ENCODE measurements at regions of chr5 and their contacts with region 1.

Region 1: GRCh38 chr5:40904205-40904993 is 4.9 kb upstream of the C7 start:
- DNase-seq: peak; percentile 19 to 33
- ATAC-seq: peak; percentile 75 to 90
- H3K4me3 ChIP-seq: no peak overlapping the region
- H3K27ac ChIP-seq: peak overlapping the region in 3 of 4 donors; percentile 15 to 64 (median 53)
- H3K4me1 ChIP-seq: peaks cover 9 to 13% of the 10 kb centered on the region in 2 donors
- H3K27me3 ChIP-seq: no peaks in the 10 kb centered on the region
- CTCF ChIP-seq: peak; percentile 62 to 78 (median 76)
- POLR2A ChIP-seq: no peak

Region 2: GRCh38 chr5:40991168-40991980 is 87.0 kb after region 1 on chr5:
- in situ Hi-C with region 1: no loop called
- intact Hi-C with region 1: loop called (anchors 5 kb)
- DNase-seq: peak; percentile 34 to 53
- ATAC-seq: peak; percentile 89 to 95
- H3K4me3 ChIP-seq: no peak overlapping the region
- H3K27ac ChIP-seq: peak overlapping the region; percentile 51 to 72 (median 68)
- H3K4me1 ChIP-seq: peaks cover 0 to 10% of the 10 kb centered on the region in 2 donors
- H3K27me3 ChIP-seq: no peaks in the 10 kb centered on the region
- CTCF ChIP-seq: no peak
- POLR2A ChIP-seq: no peak

Region 3: DNA sequence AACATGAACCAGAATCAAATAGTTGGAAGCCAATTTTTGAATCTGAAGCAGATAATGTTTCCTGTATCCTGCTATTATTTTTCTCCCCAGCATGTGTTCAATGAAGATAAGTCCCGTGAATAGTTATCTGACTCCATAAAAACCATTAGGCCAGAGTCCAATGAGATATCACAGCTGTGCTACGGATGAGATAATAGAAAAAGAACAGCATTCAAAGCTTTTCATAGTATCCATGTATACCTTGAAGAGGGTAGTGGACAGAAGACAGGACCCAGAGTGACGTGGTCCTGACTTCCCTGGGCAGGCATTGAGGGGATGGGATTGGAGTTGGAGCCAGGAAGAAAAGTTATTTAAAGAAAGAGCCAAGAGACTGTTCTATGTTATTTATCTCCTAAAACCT is 359.6 kb after region 1 on chr5:
- in situ Hi-C with region 1: no loop called
- intact Hi-C with region 1: loop called (anchors 10 kb)
- DNase-seq: no peak
- ATAC-seq: peak; percentile 64 to 77
- H3K4me3 ChIP-seq: no peak overlapping the region
- H3K27ac ChIP-seq: peak overlapping the region in 2 of 4 donors; percentile 41 to 60
- H3K4me1 ChIP-seq: no peaks in the 10 kb centered on the region
- H3K27me3 ChIP-seq: no peaks in the 10 kb centered on the region
- CTCF ChIP-seq: no peak
- POLR2A ChIP-seq: no peak

Region 4: GRCh38 chr5:41334758-41335157 is 430.4 kb after region 1 on chr5:
- in situ Hi-C with region 1: no loop called
- intact Hi-C with region 1: loop called (anchors 10 kb)
- DNase-seq: no peak
- ATAC-seq: no peak
- H3K4me3 ChIP-seq: no peak overlapping the region
- H3K27ac ChIP-seq: no peak overlapping the region
- H3K4me1 ChIP-seq: no peaks in the 10 kb centered on the region
- H3K27me3 ChIP-seq: no peaks in the 10 kb centered on the region
- CTCF ChIP-seq: no peak
- POLR2A ChIP-seq: no peak

Region 5: GRCh38 chr5:41843456-41844370 is 939.3 kb after region 1 on chr5:
- in situ Hi-C with region 1: loop called in 3 of 4 experiments (anchors 25 kb)
- intact Hi-C with region 1: loop called (anchors 2 kb)
- DNase-seq: no peak
- ATAC-seq: peak in 1 of 2 donors; percentile 60
- H3K4me3 ChIP-seq: no peak overlapping the region
- H3K27ac ChIP-seq: no peak overlapping the region
- H3K4me1 ChIP-seq: no peaks in the 10 kb centered on the region
- H3K27me3 ChIP-seq: no peaks in the 10 kb centered on the region
- CTCF ChIP-seq: peak; percentile 47 to 80 (median 68)
- POLR2A ChIP-seq: no peak

Measured in gastrocnemius medialis (tissue), 4 donors.